Prostate gland (tissue), 2 donors: ENCODE measurements at regions of chr2 and their contacts with region 1.

Region 1: DNA sequence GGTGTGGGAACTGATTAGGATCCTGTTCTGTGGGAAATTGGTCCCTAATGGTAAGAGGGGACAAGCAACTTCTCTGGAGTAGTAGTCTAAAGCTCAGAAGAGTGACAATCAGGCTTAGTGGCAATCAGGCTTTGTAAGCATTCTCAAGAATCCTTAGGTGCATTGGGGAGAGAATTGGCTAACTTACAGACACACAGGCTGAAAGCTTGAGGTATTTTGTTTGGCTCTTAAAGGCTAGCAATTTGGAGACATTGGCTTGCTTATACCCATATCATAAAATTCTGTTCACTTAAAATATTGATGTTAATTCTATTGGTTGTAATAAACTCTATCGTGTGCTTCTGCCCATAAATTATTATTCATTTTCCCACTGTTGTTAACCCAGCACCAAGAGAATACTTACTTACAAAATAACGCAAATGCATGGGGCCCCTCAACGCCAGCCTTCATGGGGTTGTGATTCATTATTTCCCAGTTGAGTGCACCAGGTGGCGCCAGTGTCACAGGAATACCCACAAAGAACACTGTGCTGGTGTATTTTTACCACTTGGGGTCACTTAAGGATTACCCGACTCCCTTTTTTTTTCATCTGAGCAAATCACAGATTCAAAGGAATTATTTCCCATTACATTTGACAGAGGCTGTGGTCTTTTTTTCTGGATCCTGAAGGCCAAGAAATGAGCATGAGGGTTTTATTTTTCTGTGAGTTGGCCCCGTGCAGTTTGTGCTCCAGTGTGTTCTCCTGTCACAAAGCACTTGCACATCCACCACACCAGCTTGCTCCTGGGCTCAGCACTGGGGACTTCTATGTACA is 45.5 kb downstream of the DDX1 start:
- DNase-seq: peak; percentile 69
- H3K4me3 ChIP-seq: no peak overlapping the region
- H3K27ac ChIP-seq: no peak overlapping the region
- H3K4me1 ChIP-seq: no peaks in the 10 kb centered on the region
- H3K27me3 ChIP-seq: no peaks in the 10 kb centered on the region
- CTCF ChIP-seq: peak; percentile 50 to 91 (median 88)
- POLR2A ChIP-seq: no peak

Region 2: GRCh38 chr2:15378148-15378908 is 258.9 kb before region 1 on chr2:
- intact Hi-C with region 1: no loop called
- DNase-seq: no peak
- H3K4me3 ChIP-seq: no peak overlapping the region
- H3K27ac ChIP-seq: no peak overlapping the region
- H3K4me1 ChIP-seq: no peaks in the 10 kb centered on the region
- H3K27me3 ChIP-seq: no peaks in the 10 kb centered on the region
- CTCF ChIP-seq: no peak
- POLR2A ChIP-seq: no peak

Region 3: GRCh38 chr2:15769676-15770547 is 132.7 kb after region 1 on chr2:
- intact Hi-C with region 1: no loop called
- DNase-seq: no peak
- H3K4me3 ChIP-seq: no peak overlapping the region
- H3K27ac ChIP-seq: no peak overlapping the region
- H3K4me1 ChIP-seq: no peaks in the 10 kb centered on the region
- H3K27me3 ChIP-seq: no peaks in the 10 kb centered on the region
- CTCF ChIP-seq: no peak
- POLR2A ChIP-seq: no peak

Region 4: GRCh38 chr2:15919716-15920434 is 282.7 kb after region 1 on chr2:
- intact Hi-C with region 1: no loop called
- DNase-seq: no peak
- H3K4me3 ChIP-seq: no peak overlapping the region
- H3K27ac ChIP-seq: no peak overlapping the region
- H3K4me1 ChIP-seq: no peaks in the 10 kb centered on the region
- H3K27me3 ChIP-seq: peaks cover 2% of the 10 kb centered on the region
- CTCF ChIP-seq: no peak
- POLR2A ChIP-seq: no peak

Region 5: DNA sequence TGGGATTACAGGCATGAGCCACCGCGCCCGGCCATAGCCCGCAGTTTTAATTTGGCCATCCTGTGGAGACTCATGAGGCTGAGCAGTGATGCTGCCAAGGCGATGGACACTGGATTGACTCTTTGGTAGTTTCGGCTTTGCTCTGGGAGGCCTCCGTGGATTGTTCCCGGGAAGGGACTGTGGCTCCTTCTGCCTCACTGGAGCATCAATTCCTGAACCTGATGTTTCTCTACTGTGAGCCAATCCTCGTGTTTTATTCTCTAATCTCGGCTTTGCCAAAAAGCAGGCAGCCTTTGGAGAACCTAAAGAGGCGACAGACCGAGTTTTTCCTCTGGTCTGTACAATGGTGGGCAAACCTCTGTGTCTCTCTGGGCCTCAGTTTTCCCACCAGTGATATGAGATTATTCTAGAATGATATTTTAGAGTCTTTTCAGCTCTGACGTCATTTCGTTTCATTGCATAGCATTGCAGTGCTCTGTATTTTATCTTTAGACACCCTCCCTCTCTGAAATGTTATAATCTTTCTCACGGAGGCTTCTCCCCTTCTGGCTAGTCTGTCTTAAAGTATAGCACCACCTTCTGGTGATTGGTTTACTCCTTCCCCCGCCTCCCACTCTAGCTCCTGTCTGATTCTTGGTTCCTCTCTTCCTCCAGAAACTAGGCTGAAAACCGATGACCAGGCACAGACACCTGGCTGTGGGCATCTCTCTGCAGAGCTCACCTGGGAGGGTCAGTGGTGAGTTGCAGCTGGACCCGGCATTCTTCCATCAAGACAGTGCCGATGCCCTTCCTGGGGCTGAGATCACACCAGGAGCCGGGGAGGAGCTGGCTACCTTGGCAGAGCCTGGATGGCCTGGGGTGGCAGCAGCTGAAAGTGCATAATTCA is 644.5 kb after region 1 on chr2:
- intact Hi-C with region 1: loop called (anchors 5 kb)
- DNase-seq: peak; percentile 21
- H3K4me3 ChIP-seq: no peak overlapping the region
- H3K27ac ChIP-seq: no peak overlapping the region
- H3K4me1 ChIP-seq: no peaks in the 10 kb centered on the region
- H3K27me3 ChIP-seq: no peaks in the 10 kb centered on the region
- CTCF ChIP-seq: peak in 3 of 4 experiments; percentile 45 to 49 (median 46)
- POLR2A ChIP-seq: no peak

Region 6: DNA sequence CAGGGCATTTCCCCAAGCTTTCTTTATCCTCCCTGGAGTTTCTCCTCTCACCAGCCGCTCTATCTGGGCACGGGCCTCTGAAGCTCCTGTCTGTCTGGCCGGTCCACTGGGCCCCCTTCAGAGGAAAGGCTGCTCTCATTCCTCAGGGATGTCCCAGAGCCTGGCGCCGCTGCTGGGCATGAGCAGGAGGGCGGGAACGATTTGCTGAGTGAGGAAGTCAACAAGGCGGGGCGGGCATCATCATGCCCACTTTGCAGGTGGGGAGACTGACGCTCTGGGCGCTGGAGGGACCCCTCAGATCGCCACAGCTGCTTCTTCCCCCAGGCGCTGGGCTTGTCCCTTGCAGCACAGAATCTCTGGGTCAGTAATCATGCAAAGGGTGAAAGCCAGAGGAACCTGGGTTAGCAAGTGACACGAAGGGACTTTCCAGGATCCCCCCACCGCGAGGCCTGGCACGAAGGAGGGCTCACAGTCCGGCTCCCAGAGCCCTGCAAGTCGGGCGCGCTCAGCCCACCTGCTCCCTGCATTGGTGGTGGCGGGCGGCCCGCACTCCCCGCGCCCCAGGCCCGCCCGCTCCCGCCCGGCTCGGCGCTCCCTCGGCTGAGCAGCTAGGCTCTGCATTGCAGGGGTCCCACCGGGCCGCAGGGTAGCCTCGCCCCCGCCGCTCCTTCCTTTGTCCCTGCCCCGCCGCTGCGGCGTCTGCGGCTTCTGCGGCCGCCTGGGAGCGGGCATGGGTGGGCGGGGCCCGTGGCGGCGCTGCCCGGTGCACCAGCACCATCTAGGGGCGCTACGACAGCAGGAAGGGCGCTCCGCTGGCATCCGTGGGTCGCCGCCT is 870.7 kb after region 1 on chr2:
- intact Hi-C with region 1: loop called (anchors 5 kb)
- DNase-seq: peak; percentile 12
- H3K4me3 ChIP-seq: peak overlapping the region; percentile 15 to 28
- H3K27ac ChIP-seq: no peak overlapping the region
- H3K4me1 ChIP-seq: no peaks in the 10 kb centered on the region
- H3K27me3 ChIP-seq: peaks cover 3% of the 10 kb centered on the region
- CTCF ChIP-seq: peak in 3 of 4 experiments; percentile 41 to 68 (median 65)
- POLR2A ChIP-seq: no peak

Region 7: DNA sequence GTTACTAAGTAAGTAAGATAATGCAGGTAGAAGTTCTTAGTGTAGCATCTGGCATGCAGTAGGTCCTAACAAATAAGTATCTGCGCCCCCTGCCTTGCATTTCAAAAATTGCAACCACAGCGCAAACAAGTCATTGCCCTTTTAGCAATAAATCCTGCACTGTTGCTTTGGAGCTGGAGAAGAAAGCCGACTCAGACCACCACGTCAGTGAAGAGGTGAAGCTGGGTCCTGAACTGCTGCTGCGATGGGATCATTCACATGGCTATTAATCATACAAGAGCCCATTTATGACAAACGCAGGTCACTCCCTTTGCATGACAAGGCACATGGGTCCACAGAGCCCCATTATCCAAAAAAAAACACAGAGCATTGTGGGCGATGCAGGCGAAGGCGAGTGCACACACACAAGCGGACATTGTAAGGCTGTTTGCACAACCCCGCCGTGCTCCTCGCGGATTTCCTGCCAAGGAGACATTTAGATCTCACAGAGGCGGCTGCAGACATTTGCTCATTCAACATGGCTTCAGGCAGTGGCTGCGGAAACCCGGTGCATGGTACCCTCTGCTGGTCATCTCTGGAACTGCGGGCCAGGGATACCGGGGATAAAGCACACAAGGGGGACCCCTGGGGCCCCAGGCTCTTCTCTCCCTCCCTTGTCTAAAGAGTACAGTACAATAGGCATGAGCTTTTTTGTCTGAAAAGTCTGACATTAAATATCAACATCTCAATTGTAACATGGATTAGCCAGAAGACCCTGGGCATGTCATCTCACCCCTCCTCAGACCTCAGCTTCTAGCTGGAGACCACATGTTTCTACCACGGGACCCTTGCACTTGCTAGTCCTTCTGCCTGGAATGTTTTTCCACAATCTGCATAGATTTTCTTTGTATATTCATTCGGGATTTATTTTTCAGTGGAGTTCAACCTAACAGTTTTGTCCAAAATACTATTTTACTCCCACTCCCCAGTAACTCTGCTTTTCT is 971.8 kb after region 1 on chr2:
- intact Hi-C with region 1: loop called (anchors 5 kb)
- DNase-seq: peak; percentile 67
- H3K4me3 ChIP-seq: peak overlapping the region; percentile 17 to 29
- H3K27ac ChIP-seq: no peak overlapping the region
- H3K4me1 ChIP-seq: no peaks in the 10 kb centered on the region
- H3K27me3 ChIP-seq: no peaks in the 10 kb centered on the region
- CTCF ChIP-seq: peak; percentile 80 to 92 (median 91)
- POLR2A ChIP-seq: no peak